Activated CD4-positive, alpha-beta memory T cell treated with anti-CD3 and anti-CD28 coated beads, Interleukin-2, amount 10 ng/mL, durations not matched to agents 7 days and 5 days (primary cell): ENCODE measurements at regions of chr10 and their contacts with region 1.

Region 1: DNA sequence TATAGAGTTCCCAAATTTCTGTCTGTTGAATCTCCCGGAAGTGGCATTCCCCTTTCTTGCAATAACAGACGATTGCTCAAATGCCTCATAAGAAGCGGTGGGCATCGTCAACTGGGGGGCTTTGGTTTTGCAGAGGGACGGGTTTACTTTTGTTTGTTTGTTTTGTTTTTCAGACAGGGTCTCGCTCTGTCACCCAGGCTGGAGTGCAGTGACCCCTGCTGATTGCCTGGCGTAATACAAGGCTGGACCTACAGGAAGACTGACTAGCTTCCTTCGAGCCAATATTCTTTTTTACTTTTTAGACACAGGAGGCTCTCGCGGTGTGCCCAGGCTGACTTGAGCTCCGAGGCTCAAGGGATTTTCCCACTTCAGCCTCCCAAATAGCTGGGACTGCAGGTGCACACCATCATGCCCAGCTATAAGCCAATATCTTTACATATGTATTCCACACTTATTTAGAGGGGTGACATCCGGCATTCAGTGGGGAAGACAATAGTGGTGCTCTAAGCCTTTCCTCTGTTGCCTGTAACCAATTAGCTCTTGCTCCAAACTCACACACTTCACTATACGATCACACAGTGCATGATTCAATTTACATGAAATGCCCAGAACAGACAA is 58.1 kb downstream of the FHIP2A start:
- DNase-seq: peak; percentile 64
- H3K4me3 Mint-ChIP-seq: no peak overlapping the region
- H3K27ac Mint-ChIP-seq: no peak overlapping the region
- H3K4me1 Mint-ChIP-seq: peaks cover 26% of the 10 kb centered on the region
- H3K27me3 Mint-ChIP-seq: peaks cover 23% of the 10 kb centered on the region

Region 2: GRCh38 chr10:114577133-114577532 is 302.5 kb before region 1 on chr10:
- CTCF ChIA-PET with region 1: no interaction called
- POLR2A ChIA-PET with region 1: no interaction called
- DNase-seq: no peak
- H3K4me3 Mint-ChIP-seq: no peak overlapping the region
- H3K27ac Mint-ChIP-seq: no peak overlapping the region
- H3K4me1 Mint-ChIP-seq: no peaks in the 10 kb centered on the region
- H3K27me3 Mint-ChIP-seq: peaks cover 6% of the 10 kb centered on the region

Region 3: DNA sequence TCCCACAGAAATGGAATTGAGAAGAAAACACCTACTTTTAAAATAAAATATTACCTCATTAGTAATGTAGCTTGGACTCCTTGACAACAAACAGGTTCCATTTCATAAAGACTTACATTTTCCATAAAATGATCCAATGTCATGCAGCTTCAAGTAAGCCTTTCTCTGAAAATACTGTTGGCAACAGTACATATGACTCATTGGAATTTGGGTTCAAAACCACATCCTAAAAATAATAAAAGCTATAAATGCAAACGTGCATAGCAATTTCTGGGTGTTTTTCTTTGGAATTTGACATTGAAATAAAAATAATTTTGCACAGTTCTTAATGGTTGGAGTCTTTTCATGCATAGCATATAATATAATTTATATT is 10.1 kb before region 1 on chr10:
- CTCF ChIA-PET with region 1: interaction called, 19 read pairs
- POLR2A ChIA-PET with region 1: interaction called, 3 read pairs
- DNase-seq: no peak
- H3K4me3 Mint-ChIP-seq: no peak overlapping the region
- H3K27ac Mint-ChIP-seq: no peak overlapping the region
- H3K4me1 Mint-ChIP-seq: no peaks in the 10 kb centered on the region
- H3K27me3 Mint-ChIP-seq: no peaks in the 10 kb centered on the region

Region 4: GRCh38 chr10:114911052-114911711 is 31.5 kb after region 1 on chr10:
- CTCF ChIA-PET with region 1: interaction called, 12 read pairs
- POLR2A ChIA-PET with region 1: no interaction called
- DNase-seq: no peak
- H3K4me3 Mint-ChIP-seq: peak overlapping the region; percentile 21
- H3K27ac Mint-ChIP-seq: peak overlapping the region; percentile 72
- H3K4me1 Mint-ChIP-seq: peaks cover 44% of the 10 kb centered on the region
- H3K27me3 Mint-ChIP-seq: peaks cover 3% of the 10 kb centered on the region

Region 5: DNA sequence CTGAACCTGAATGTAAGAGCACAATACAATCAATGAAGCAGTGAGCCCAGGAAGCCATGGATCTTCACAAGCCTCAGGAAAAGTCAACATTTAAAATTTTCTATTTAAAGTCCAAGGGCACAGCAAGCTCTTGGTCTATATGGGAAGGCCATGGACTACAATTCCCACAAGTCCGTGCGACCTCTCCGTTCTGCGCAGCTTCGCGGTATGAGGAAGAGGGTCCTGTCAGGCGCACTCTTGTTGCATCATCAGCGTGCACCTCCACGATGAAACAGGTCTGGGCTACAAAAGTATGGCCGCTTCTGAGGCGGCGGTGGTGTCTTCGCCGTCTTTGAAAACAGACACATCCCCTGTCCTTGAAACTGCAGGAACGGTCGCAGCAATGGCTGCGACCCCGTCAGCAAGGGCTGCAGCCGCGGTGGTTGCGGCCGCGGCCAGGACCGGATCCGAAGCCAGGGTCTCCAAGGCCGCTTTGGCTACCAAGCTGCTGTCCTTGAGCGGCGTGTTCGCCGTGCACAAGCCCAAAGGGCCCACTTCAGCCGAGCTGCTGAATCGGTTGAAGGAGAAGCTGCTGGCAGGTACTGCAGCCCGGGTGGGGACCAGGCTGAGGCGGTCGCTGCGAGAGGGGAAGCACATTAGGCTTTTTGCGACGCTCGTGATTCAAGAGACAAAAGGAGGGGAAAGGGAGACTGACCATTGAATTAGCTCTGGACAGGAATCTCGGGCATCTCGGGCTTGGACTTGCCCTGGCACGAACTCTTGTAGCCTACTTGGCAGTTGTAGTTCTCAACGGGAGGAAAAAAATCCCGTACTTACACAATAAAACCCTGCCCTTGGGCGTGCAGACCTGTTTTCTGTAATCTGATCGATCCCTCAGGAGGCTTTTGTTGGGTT is 58.6 kb after region 1 on chr10 and contains the start of gene TRUB1:
- CTCF ChIA-PET with region 1: interaction called, 13 read pairs
- POLR2A ChIA-PET with region 1: interaction called, 3 read pairs
- DNase-seq: peak; percentile 93
- H3K4me3 Mint-ChIP-seq: peak within 1 kb of the TSS; percentile 94
- H3K27ac Mint-ChIP-seq: peak within 1 kb of the TSS; percentile 83
- H3K4me1 Mint-ChIP-seq: peaks cover 32% of the 10 kb centered on the region
- H3K27me3 Mint-ChIP-seq: no peaks in the 10 kb centered on the region
- total RNA-seq, gene TRUB1: 14.9 to 16.7 TPM

Region 6: DNA sequence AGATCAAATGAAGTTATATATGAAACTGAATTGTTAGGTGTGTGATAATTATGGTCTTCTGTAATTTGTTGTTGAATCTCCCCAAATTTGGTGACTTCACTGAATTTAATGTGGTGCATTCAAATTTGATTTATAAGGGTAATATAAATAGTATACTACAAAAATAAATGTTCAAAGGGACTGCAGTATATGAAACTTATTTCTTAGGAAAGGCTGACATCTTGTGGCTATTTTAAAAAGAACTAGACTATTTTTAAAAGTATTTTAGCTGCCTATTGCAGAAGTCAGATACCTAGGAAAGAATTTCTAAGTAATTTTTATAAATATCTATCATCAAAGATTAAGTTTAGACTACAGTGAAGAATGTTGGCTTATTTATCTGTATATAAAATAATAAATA is 250.1 kb after region 1 on chr10:
- CTCF ChIA-PET with region 1: interaction called, 16 read pairs
- POLR2A ChIA-PET with region 1: interaction called, 3 read pairs
- DNase-seq: no peak
- H3K4me3 Mint-ChIP-seq: no peak overlapping the region
- H3K27ac Mint-ChIP-seq: no peak overlapping the region
- H3K4me1 Mint-ChIP-seq: no peaks in the 10 kb centered on the region
- H3K27me3 Mint-ChIP-seq: peaks cover 12% of the 10 kb centered on the region